ENCODE measurements at regions of chr10 and their contacts with region 1.

Region 1: GRCh38 chr10:46228563-46229071 is 58.2 kb upstream of the ANTXRL start:
- DNase-seq: peak; percentile 49

Region 2: DNA sequence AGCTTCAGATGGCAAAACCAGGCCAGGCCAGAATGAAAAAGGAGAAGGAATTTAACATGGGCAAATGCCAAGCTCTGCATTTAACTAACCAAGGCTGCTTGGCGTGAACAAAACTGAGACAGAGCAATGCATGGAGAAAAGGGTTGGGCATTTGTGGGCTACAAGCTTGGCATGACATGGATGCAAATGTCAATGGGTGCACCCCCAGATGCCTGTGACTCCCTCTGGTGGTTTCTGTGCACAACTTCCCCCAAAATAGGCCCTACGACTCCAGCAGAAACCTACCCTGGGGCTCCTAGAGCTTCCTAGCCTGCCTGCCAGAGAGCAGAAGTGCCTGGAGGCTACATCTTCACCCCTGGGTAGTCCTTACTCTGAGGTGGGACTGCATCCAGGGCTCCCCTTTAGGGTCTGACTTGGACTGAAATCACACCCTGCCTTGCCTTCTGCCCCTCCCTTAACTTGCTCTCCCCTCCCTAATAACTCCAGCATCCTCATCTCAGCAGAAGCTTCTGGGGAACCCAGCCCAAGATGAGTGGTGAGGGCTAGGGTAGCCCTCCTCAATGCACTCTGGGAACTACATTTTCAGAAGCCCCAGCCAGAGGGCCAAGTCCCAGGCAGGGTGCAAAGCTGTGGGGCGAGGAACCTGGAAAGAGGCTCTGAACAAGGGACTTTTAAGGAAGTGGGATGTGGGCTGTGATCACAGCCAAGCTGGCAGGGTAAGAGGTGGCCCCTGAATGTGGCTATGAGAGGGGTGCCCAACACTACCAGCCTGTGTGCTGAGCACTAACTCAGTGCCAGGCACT is 316.6 kb after region 1 on chr10:
- in situ Hi-C with region 1: loop called (anchors 25 kb)
- DNase-seq: no peak

Measured in G401 (cell line).